OCI-LY7 (cell line): ENCODE measurements at regions of chr6 and their contacts with region 1.

Region 1: DNA sequence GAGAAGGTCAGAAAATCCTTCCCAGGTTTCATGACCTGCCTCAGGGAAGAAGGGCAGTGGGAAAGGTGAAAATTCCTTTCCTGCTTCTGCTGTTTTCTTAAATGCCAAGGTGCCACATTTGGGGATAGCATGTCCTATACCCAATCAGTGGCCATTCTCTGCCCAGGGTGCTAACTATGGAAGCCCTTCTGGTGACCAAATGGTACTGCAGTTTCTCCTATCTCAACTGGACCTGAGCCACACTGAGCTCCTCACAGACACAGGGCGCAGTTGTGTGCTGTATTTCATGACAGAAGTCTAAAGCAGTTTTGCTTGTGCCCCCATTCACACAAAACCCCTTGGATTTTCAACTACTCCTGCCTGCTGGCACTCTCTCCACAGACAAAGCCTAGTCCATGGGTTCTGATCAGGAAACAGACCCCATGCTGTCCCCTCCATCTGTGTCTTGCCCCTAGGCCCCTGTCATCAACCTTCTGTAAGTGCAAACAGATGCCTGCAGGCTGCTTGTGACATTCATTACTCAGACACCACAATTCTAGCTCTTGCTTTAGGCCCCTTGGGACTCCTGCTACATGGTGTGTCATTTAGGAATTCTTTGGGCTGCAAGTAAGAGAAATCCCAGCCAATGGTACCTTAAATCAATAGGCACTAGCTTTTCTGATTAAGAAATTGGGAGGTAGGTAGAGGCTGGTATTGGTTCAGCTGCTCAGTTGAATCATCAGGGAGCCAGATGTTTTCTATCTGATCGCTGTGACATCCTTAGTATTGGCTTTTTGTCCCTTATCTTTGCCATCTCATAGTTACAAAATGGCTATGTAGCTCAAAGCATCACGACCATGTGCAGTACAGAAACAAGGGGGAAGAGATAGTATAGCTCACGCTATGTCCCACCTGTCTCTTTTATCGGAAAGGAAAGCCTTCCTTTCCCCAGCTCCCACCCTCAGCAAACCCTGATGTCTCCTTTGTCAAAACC is 147.8 kb downstream of the CD83 start:
- DNase-seq: no peak
- H3K4me3 ChIP-seq: peak overlapping the region; percentile 8
- H3K27ac ChIP-seq: peak overlapping the region; percentile 59
- H3K4me1 ChIP-seq: peaks cover 55% of the 10 kb centered on the region
- CTCF ChIP-seq: peak; percentile 33; the same call in 1 of the 2 replicates

Region 2: GRCh38 chr6:14254505-14254904 is 10.8 kb before region 1 on chr6:
- CTCF ChIA-PET with region 1: interaction called, 3 read pairs
- POLR2A ChIA-PET with region 1: interaction called, 20 read pairs
- intact Hi-C with region 1: no loop called
- DNase-seq: peak; percentile 88
- H3K4me3 ChIP-seq: peak overlapping the region; percentile 25
- H3K27ac ChIP-seq: peak overlapping the region; percentile 73
- H3K4me1 ChIP-seq: peaks cover 63% of the 10 kb centered on the region
- CTCF ChIP-seq: no peak